ENCODE measurements at regions of chr1 and their contacts with region 1.

Region 1: DNA sequence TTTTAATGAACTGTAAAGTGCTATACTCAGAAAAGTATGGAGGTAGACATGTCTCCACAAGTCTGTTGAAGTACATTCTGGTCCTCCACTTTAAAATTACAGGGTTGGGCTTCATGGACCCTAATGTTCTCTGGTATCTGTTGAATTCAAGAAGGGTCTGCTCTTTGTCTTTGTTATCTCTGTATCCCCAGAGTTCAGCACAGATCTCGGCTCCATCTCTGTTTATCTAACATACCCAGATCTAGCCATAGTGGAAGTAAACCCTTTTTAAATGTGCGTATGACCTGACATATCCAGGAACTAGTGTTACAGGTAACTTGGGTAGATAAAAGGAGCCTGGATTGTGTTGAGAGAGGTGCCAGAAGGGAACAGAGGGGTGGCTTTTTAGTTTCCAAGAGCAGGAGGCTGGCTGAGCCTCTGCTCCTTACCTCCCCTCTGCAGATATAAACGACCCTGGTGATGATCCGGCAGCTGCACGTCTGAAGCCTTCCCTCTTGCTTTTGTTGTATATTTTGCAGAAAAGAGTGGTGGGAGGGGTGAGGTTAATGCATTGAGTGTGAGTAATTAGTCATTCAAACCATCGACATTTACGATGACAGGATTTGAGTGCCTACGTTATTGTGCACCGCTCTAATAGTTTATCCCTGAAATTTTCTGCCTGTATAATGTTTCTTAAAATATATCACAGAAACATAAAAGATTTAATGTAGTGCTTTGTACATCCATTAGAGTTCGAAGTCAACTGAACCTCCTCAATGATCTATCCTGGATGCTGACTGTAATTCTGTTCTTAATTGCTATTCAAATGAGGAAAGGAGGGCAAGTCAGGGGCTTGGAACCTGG is 30.8 kb downstream of the ELAVL4 start:
- DNase-seq: no peak
- H3K4me3 ChIP-seq: no peak overlapping the region
- H3K27ac ChIP-seq: no peak overlapping the region
- H3K4me1 ChIP-seq: no peaks in the 10 kb centered on the region
- H3K27me3 ChIP-seq: no peaks in the 10 kb centered on the region
- CTCF ChIP-seq: no peak

Region 2: GRCh38 chr1:50105433-50105832 is 34.1 kb before region 1 on chr1:
- intact Hi-C with region 1: no loop called
- DNase-seq: no peak
- H3K4me3 ChIP-seq: no peak overlapping the region
- H3K27ac ChIP-seq: no peak overlapping the region
- H3K4me1 ChIP-seq: peaks cover 0 to 2% (median 0%) of the 10 kb centered on the region in 4 donors
- H3K27me3 ChIP-seq: peaks cover 0 to 11% of the 10 kb centered on the region in 2 donors
- CTCF ChIP-seq: no peak

Region 3: GRCh38 chr1:50183378-50184133 is 44.0 kb after region 1 on chr1:
- intact Hi-C with region 1: no loop called
- DNase-seq: no peak
- H3K4me3 ChIP-seq: no peak overlapping the region
- H3K27ac ChIP-seq: no peak overlapping the region
- H3K4me1 ChIP-seq: no peaks in the 10 kb centered on the region
- H3K27me3 ChIP-seq: no peaks in the 10 kb centered on the region
- CTCF ChIP-seq: no peak

Region 4: DNA sequence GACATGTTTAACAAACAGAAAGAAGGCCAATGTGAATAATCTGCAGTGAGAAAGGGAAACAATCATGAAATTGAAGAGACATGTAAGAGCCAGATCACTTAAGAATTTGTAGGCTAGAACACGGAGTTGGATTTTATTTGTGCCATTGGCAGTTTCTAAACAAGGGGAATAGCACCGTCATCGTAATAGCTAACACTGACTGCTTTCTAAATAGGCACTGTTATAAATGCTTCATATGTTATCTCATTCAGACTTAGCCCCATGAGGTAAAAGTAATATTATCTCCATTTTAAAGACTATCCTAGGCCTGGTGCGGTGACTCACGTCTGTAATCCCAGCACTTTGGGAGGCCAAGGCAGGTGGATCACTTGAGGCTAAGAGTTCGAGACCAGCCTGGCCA is 974.6 kb after region 1 on chr1:
- intact Hi-C with region 1: loop called (anchors 5 kb)
- DNase-seq: no peak
- H3K4me3 ChIP-seq: no peak overlapping the region
- H3K27ac ChIP-seq: no peak overlapping the region
- H3K4me1 ChIP-seq: no peaks in the 10 kb centered on the region
- H3K27me3 ChIP-seq: no peaks in the 10 kb centered on the region
- CTCF ChIP-seq: no peak